Heart right ventricle (tissue), 16 donors: ENCODE measurements at regions of chr11 and their contacts with region 1.

Region 1: GRCh38 chr11:67167086-67167485 is 48.0 kb downstream of the KDM2A start:
- DNase-seq: no peak
- ATAC-seq: no peak
- H3K4me3 ChIP-seq: no peak overlapping the region
- H3K27ac ChIP-seq: peak overlapping the region in 1 of 10 donors; percentile 40
- H3K4me1 ChIP-seq: peaks cover 3 to 35% (median 22%) of the 10 kb centered on the region in 9 donors
- H3K27me3 ChIP-seq: no peaks in the 10 kb centered on the region
- CTCF ChIP-seq: no peak

Region 2: GRCh38 chr11:67118801-67119584 is 48.1 kb before region 1 on chr11 and contains the start of gene KDM2A:
- intact Hi-C with region 1: loop called in 2 of 10 experiments (anchors 5 kb)
- DNase-seq: peak; percentile 99 to 100
- ATAC-seq: peak; percentile 93 to 97 (median 95)
- H3K4me3 ChIP-seq: peak within 1 kb of the TSS; percentile 85 to 98 (median 94)
- H3K27ac ChIP-seq: peak within 1 kb of the TSS; percentile 96 to 100 (median 98)
- H3K4me1 ChIP-seq: peaks cover 15 to 51% (median 26%) of the 10 kb centered on the region in 9 donors
- H3K27me3 ChIP-seq: no peaks in the 10 kb centered on the region
- CTCF ChIP-seq: peak in 7 of 9 donors; percentile 19 to 59 (median 40)
- total RNA-seq, gene KDM2A: 31.3 to 45.7 (median 37.5) TPM